K562 (cell line): ENCODE measurements at regions of chr3 and their contacts with region 1.

Region 1: GRCh38 chr3:196528639-196529233 is 13.6 kb upstream of the SMCO1 start:
- DNase-seq: peak; percentile 88 to 90 (median 90)
- ATAC-seq: peak; percentile 98
- H3K4me3 ChIP-seq: peak overlapping the region; percentile 53
- H3K27ac ChIP-seq: peak overlapping the region; percentile 81
- H3K4me1 ChIP-seq: peaks cover 8 to 22% of the 10 kb centered on the region in 2 experiments; a peak in 4 of 5 replicates
- H3K27me3 ChIP-seq: no peaks in the 10 kb centered on the region
- CTCF ChIP-seq: peak; percentile 81 to 87 (median 84)
- EP300 ChIP-seq: no peak
- POLR2A ChIP-seq: peak; percentile 74
- RAD21 ChIP-seq: peak; percentile 77 to 79

Region 2: DNA sequence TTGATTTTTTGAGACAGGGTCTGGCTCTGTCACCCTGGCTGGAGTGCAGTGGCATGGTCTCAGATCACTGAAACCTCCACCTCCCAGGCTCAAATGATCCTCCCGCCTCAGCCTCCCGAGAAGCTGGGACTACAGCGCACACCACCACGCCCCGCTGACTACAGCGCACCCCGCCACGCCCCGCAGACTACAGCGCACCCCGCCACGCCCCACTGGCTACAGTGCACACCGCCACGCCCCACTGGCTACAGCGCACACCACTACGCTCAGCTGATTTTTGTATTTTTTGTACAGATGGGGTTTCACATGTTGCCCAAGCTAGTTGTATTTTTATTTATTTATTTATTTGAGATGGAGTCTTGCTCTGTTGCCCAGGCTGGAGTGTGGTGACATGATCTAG is 276.8 kb before region 1 on chr3:
- CTCF ChIA-PET with region 1: no interaction called
- POLR2A ChIA-PET with region 1: no interaction called
- in situ Hi-C with region 1: loop called (anchors 5 kb)
- intact Hi-C with region 1: no loop called
- DNase-seq: no peak
- ATAC-seq: no peak
- H3K4me3 ChIP-seq: no peak overlapping the region
- H3K27ac ChIP-seq: no peak overlapping the region
- H3K4me1 ChIP-seq: no peaks in the 10 kb centered on the region
- H3K27me3 ChIP-seq: no peaks in the 10 kb centered on the region
- CTCF ChIP-seq: no peak
- EP300 ChIP-seq: no peak
- POLR2A ChIP-seq: no peak
- RAD21 ChIP-seq: no peak

Region 3: GRCh38 chr3:196568246-196569002 is 39.7 kb after region 1 on chr3 and contains the starts of genes FBXO45 and WDR53:
- CTCF ChIA-PET with region 1: no interaction called
- POLR2A ChIA-PET with region 1: interaction called, 5 read pairs
- in situ Hi-C with region 1: no loop called
- intact Hi-C with region 1: loop called (anchors 5 kb)
- DNase-seq: peak; percentile 92 to 96 (median 94)
- ATAC-seq: peak; percentile 94
- H3K4me3 ChIP-seq: peak within 1 kb of the TSS; percentile 87
- H3K27ac ChIP-seq: peak within 1 kb of the TSS; percentile 92
- H3K4me1 ChIP-seq: peaks cover 33 to 36% of the 10 kb centered on the region in 2 experiments
- H3K27me3 ChIP-seq: no peaks in the 10 kb centered on the region
- CTCF ChIP-seq: no peak
- EP300 ChIP-seq: peak; percentile 42; the same call in 1 of the 2 replicates
- POLR2A ChIP-seq: peak; percentile 94
- RAD21 ChIP-seq: no peak
- polyA plus RNA-seq, gene FBXO45: 15.2 to 17.2 TPM
- polyA plus RNA-seq, gene WDR53: 21.6 to 34.5 TPM

Region 4: GRCh38 chr3:196684548-196685407 is 156.0 kb after region 1 on chr3:
- CTCF ChIA-PET with region 1: interaction called, 8 read pairs
- POLR2A ChIA-PET with region 1: no interaction called
- in situ Hi-C with region 1: loop called (anchors 5 kb)
- intact Hi-C with region 1: loop called (anchors 1 kb)
- DNase-seq: peak; percentile 63 to 81 (median 68)
- ATAC-seq: peak; percentile 92
- H3K4me3 ChIP-seq: no peak overlapping the region
- H3K27ac ChIP-seq: no peak overlapping the region
- H3K4me1 ChIP-seq: peaks cover 3 to 7% of the 10 kb centered on the region in 2 experiments; a peak in 3 of 5 replicates
- H3K27me3 ChIP-seq: no peaks in the 10 kb centered on the region
- CTCF ChIP-seq: peak; percentile 81 to 91 (median 84)
- EP300 ChIP-seq: no peak
- POLR2A ChIP-seq: no peak
- RAD21 ChIP-seq: peak; percentile 96 to 97

Region 5: DNA sequence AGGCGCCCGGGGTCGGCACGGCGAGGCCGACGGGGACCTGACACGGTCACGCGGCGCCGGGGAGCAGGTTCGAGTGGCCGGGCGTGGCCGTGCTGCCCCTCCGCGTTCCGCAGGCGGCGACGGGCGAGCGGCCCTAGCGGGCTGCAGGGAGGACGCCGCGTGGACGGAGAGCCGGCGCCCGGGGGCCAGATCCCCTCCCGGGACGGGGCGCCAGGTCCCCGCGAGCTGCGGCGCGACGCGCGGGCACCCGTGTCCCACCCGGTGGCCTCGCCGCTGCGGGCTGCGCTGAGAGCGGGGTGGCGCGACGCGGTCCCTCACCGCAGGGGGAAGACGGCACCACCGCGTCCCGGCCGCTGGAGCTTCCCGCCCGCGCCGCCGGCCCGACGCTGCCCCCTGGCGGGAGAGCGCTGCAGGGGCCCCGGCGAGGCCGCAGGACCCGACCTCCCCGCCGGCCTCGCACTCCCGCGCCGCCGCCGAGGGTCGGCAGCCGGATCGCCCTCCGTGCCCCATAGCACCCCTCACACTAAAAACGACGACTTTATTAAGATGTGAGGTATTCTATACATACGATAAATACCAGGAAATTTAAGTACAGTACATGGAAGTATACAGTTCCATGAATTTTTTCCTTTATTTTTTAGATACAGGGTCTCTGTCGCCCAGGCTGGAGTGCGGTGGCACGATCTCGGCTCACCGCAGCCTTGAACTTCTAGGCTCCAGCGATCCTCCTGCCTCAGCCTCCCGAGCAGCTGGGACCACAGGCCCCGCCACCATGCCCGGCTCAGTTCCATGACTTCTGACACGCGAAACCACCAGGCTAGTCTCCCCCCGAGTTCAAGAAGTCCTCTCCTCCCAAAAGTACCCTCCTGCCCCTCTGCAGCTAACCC is 441.2 kb after region 1 on chr3:
- CTCF ChIA-PET with region 1: interaction called, 5 read pairs
- POLR2A ChIA-PET with region 1: interaction called, 3 read pairs
- in situ Hi-C with region 1: no loop called
- intact Hi-C with region 1: loop called (anchors 5 kb)
- DNase-seq: peak; percentile 82 to 90 (median 88)
- ATAC-seq: peak; percentile 86
- H3K4me3 ChIP-seq: peak overlapping the region; percentile 71
- H3K27ac ChIP-seq: peak overlapping the region; percentile 94
- H3K4me1 ChIP-seq: peaks cover 20 to 32% of the 10 kb centered on the region in 2 experiments; a peak in 4 of 5 replicates
- H3K27me3 ChIP-seq: no peaks in the 10 kb centered on the region
- CTCF ChIP-seq: peak; percentile 57 to 97 (median 76)
- EP300 ChIP-seq: no peak
- POLR2A ChIP-seq: no peak
- RAD21 ChIP-seq: peak; percentile 78 to 90